ENCODE measurements at regions of chr6 and their contacts with region 1.

Region 1: DNA sequence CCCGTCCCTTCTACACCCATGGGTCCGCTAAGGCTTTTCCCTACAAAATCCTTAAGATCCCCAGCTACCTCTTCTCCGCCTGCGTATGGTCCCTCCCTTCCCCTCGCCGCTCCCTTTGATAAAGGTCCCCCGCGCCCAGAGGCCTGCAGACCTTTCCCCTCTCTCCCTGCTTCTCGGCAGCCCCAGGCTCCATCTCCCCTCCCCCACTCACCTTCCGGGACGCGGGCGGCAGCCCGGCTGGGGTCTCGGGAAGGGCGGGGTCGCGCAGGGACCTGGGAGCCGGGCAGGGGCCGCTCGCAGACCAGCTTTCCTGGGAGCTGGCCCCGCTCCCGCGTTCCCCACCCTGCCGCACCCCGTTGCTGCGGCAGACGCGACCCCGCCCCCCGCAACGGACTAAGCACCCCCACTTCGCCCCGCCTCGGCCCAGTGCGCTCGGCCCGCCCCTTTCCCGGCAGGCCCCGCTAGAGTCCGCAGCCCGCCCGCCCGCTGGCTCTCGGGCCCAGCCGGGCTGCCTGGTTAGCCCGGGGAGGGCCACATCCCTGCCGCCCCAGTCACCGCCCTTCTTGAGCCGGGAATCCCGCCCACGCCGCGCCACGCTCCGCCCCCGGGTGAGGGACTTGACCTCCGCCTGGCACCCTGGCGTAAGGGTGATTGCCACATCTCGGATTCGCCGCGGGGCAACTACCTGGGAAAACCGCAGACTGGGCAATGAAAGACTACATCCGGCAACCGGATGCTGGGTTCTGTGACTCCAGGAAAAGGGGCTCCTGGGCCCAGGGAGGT is at the start of gene FLOT1:
- DNase-seq: peak; percentile 66 to 93 (median 80)
- ATAC-seq: peak; percentile 60
- H3K4me3 ChIP-seq: peak within 1 kb of the TSS; percentile 75 to 84
- H3K4me3 Mint-ChIP-seq: peak within 1 kb of the TSS; percentile 91
- H3K27ac ChIP-seq: peak within 1 kb of the TSS; percentile 49 to 68
- H3K27ac Mint-ChIP-seq: peak within 1 kb of the TSS; percentile 85
- H3K4me1 ChIP-seq: peaks cover 45% of the 10 kb centered on the region
- H3K4me1 Mint-ChIP-seq: peaks cover 60% of the 10 kb centered on the region
- H3K27me3 ChIP-seq: no peaks in the 10 kb centered on the region
- H3K27me3 Mint-ChIP-seq: no peaks in the 10 kb centered on the region
- CTCF ChIP-seq: no peak
- total RNA-seq, gene FLOT1: 27.5 to 27.8 TPM

Region 2: GRCh38 chr6:29071831-29072723 is 1670.4 kb before region 1 on chr6:
- CTCF ChIA-PET with region 1: no interaction called
- POLR2A ChIA-PET with region 1: no interaction called
- intact Hi-C with region 1: no loop called
- DNase-seq: peak in 2 of 9 experiments; percentile 7 to 8
- ATAC-seq: no peak
- H3K4me3 ChIP-seq: no peak overlapping the region
- H3K4me3 Mint-ChIP-seq: no peak overlapping the region
- H3K27ac ChIP-seq: no peak overlapping the region
- H3K27ac Mint-ChIP-seq: no peak overlapping the region
- H3K4me1 ChIP-seq: no peaks in the 10 kb centered on the region
- H3K4me1 Mint-ChIP-seq: no peaks in the 10 kb centered on the region
- H3K27me3 ChIP-seq: no peaks in the 10 kb centered on the region
- H3K27me3 Mint-ChIP-seq: peaks cover 48% of the 10 kb centered on the region
- CTCF ChIP-seq: no peak

Region 3: GRCh38 chr6:30730601-30731435 is 11.7 kb before region 1 on chr6:
- CTCF ChIA-PET with region 1: interaction called, 18 read pairs
- POLR2A ChIA-PET with region 1: interaction called, 4 read pairs
- intact Hi-C with region 1: no loop called
- DNase-seq: peak; percentile 67 to 91 (median 85)
- ATAC-seq: peak; percentile 98
- H3K4me3 ChIP-seq: peak overlapping the region in 1 of 2 experiments; percentile 21
- H3K4me3 Mint-ChIP-seq: peak overlapping the region; percentile 47
- H3K27ac ChIP-seq: no peak overlapping the region
- H3K27ac Mint-ChIP-seq: no peak overlapping the region
- H3K4me1 ChIP-seq: peaks cover 29% of the 10 kb centered on the region
- H3K4me1 Mint-ChIP-seq: peaks cover 37% of the 10 kb centered on the region
- H3K27me3 ChIP-seq: no peaks in the 10 kb centered on the region
- H3K27me3 Mint-ChIP-seq: no peaks in the 10 kb centered on the region
- CTCF ChIP-seq: peak; percentile 67

Region 4: GRCh38 chr6:30781743-30782424 is 39.4 kb after region 1 on chr6:
- CTCF ChIA-PET with region 1: interaction called, 3 read pairs
- POLR2A ChIA-PET with region 1: no interaction called
- intact Hi-C with region 1: loop called in 1 of 2 experiments (anchors 5 kb)
- DNase-seq: peak in 4 of 9 experiments; percentile 18 to 56 (median 29)
- ATAC-seq: no peak
- H3K4me3 ChIP-seq: no peak overlapping the region
- H3K4me3 Mint-ChIP-seq: no peak overlapping the region
- H3K27ac ChIP-seq: no peak overlapping the region
- H3K27ac Mint-ChIP-seq: no peak overlapping the region
- H3K4me1 ChIP-seq: peaks cover 18% of the 10 kb centered on the region
- H3K4me1 Mint-ChIP-seq: peaks cover 43% of the 10 kb centered on the region
- H3K27me3 ChIP-seq: no peaks in the 10 kb centered on the region
- H3K27me3 Mint-ChIP-seq: no peaks in the 10 kb centered on the region
- CTCF ChIP-seq: no peak

Region 5: GRCh38 chr6:30821862-30822782 is 79.6 kb after region 1 on chr6:
- CTCF ChIA-PET with region 1: interaction called, 12 read pairs
- POLR2A ChIA-PET with region 1: no interaction called
- intact Hi-C with region 1: no loop called
- DNase-seq: peak in 2 of 9 experiments; percentile 58 to 64
- ATAC-seq: peak; percentile 44
- H3K4me3 ChIP-seq: no peak overlapping the region
- H3K4me3 Mint-ChIP-seq: no peak overlapping the region
- H3K27ac ChIP-seq: peak overlapping the region in 1 of 2 experiments; percentile 3
- H3K27ac Mint-ChIP-seq: peak overlapping the region; percentile 81
- H3K4me1 ChIP-seq: peaks cover 10% of the 10 kb centered on the region
- H3K4me1 Mint-ChIP-seq: peaks cover 62% of the 10 kb centered on the region
- H3K27me3 ChIP-seq: no peaks in the 10 kb centered on the region
- H3K27me3 Mint-ChIP-seq: no peaks in the 10 kb centered on the region
- CTCF ChIP-seq: peak; percentile 61

Region 6: GRCh38 chr6:30844091-30844535 is 101.6 kb after region 1 on chr6:
- CTCF ChIA-PET with region 1: no interaction called
- POLR2A ChIA-PET with region 1: no interaction called
- intact Hi-C with region 1: no loop called
- DNase-seq: no peak
- ATAC-seq: no peak
- H3K4me3 ChIP-seq: no peak overlapping the region
- H3K4me3 Mint-ChIP-seq: no peak overlapping the region
- H3K27ac ChIP-seq: no peak overlapping the region
- H3K27ac Mint-ChIP-seq: no peak overlapping the region
- H3K4me1 ChIP-seq: peaks cover 13% of the 10 kb centered on the region
- H3K4me1 Mint-ChIP-seq: peaks cover 38% of the 10 kb centered on the region
- H3K27me3 ChIP-seq: no peaks in the 10 kb centered on the region
- H3K27me3 Mint-ChIP-seq: no peaks in the 10 kb centered on the region
- CTCF ChIP-seq: no peak

Measured in CD8-positive, alpha-beta T cell (primary cell).